ENCODE measurements at regions of chr6 and their contacts with region 1.

Region 1: GRCh38 chr6:16712931-16713484 is 48.3 kb downstream of the ATXN1 start:
- DNase-seq: peak; percentile 57
- ATAC-seq: peak; percentile 63
- H3K4me3 Mint-ChIP-seq: peak overlapping the region; percentile 45
- H3K27ac Mint-ChIP-seq: peak overlapping the region; percentile 91
- H3K4me1 Mint-ChIP-seq: peaks cover 52% of the 10 kb centered on the region
- H3K27me3 Mint-ChIP-seq: no peaks in the 10 kb centered on the region

Region 2: DNA sequence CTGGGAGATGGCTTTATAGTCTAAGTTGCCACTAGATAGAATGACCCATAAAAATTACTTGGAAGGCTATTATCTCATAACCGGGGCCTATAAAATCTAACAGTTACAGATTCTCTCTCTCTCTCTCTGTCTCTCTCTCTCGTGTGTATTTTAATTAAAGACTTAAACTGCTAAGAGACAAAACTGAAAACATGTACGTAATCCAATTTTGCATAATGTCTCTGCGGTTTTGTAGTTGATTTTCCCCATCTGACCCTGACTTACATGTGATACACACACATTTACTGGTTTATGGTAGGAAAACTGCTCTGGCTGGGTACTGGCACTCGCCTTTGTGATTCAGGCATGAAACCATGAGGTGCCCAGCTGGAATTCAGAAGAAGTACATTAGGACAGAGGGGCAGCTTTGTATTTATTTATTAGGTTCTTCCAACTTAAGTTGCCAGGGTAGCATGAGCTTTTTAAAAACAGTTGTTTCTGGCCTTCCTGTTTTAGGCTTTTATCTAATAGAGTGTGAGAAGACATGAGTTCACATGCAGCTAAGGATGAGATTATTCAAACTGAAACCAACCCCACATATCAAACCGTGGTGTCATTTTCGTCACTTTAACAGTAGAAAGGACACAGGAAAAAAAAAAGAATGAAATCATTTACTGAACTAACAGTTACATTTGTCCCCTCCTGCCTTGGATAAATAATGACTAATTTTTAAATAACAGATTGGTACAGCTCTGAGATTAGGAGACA is 292.1 kb before region 1 on chr6:
- CTCF ChIA-PET with region 1: interaction called, 3 read pairs
- POLR2A ChIA-PET with region 1: no interaction called
- intact Hi-C with region 1: loop called in 1 of 2 experiments (anchors 2 kb)
- DNase-seq: peak; percentile 66
- ATAC-seq: peak; percentile 82
- H3K4me3 Mint-ChIP-seq: peak overlapping the region; percentile 58
- H3K27ac Mint-ChIP-seq: peak overlapping the region; percentile 94
- H3K4me1 Mint-ChIP-seq: peaks cover 53% of the 10 kb centered on the region
- H3K27me3 Mint-ChIP-seq: no peaks in the 10 kb centered on the region

Region 3: GRCh38 chr6:16591396-16592222 is 121.4 kb before region 1 on chr6:
- CTCF ChIA-PET with region 1: no interaction called
- POLR2A ChIA-PET with region 1: no interaction called
- intact Hi-C with region 1: loop called in 1 of 2 experiments (anchors 2 kb)
- DNase-seq: peak; percentile 61
- ATAC-seq: peak; percentile 87
- H3K4me3 Mint-ChIP-seq: no peak overlapping the region
- H3K27ac Mint-ChIP-seq: peak overlapping the region; percentile 78
- H3K4me1 Mint-ChIP-seq: peaks cover 19% of the 10 kb centered on the region
- H3K27me3 Mint-ChIP-seq: no peaks in the 10 kb centered on the region

Region 4: GRCh38 chr6:16670183-16670582 is 42.8 kb before region 1 on chr6:
- CTCF ChIA-PET with region 1: interaction called, 3 read pairs
- POLR2A ChIA-PET with region 1: no interaction called
- intact Hi-C with region 1: loop called (anchors 1 to 2 kb)
- DNase-seq: no peak
- ATAC-seq: peak; percentile 38
- H3K4me3 Mint-ChIP-seq: peak overlapping the region; percentile 7
- H3K27ac Mint-ChIP-seq: peak overlapping the region; percentile 87
- H3K4me1 Mint-ChIP-seq: peaks cover 63% of the 10 kb centered on the region
- H3K27me3 Mint-ChIP-seq: no peaks in the 10 kb centered on the region

Region 5: DNA sequence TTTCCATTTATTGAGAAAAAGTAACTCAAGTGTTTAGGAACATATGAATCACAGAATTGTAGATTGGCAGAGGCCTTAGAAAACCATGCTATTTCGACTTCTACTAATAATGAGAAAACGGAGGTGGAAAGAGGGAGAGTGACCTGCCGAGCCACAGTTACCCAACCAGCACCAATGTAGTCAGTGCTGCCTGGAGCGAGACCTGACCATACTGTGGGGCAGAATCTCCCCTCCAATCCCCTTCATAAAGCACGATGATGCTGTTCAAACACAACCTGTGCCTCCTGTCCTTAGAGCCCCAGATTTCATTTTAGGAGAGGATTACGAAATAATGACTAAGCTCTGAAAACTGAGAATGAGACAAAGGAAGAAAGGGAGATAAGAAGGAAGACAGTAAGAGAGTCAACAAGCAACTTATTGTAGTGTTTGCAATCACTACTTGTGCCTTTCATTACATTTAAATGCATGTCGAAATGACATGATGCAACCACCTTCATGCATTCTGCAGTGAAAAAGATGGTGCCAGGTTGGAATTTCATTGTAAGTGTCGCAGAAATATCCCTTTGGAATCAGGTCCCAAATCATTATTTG is 22.3 kb before region 1 on chr6:
- CTCF ChIA-PET with region 1: interaction called, 3 read pairs
- POLR2A ChIA-PET with region 1: no interaction called
- intact Hi-C with region 1: loop called (anchors 1 to 2 kb)
- DNase-seq: peak; percentile 73
- ATAC-seq: peak; percentile 75
- H3K4me3 Mint-ChIP-seq: peak overlapping the region; percentile 34
- H3K27ac Mint-ChIP-seq: peak overlapping the region; percentile 88
- H3K4me1 Mint-ChIP-seq: peaks cover 88% of the 10 kb centered on the region
- H3K27me3 Mint-ChIP-seq: no peaks in the 10 kb centered on the region

Region 6: DNA sequence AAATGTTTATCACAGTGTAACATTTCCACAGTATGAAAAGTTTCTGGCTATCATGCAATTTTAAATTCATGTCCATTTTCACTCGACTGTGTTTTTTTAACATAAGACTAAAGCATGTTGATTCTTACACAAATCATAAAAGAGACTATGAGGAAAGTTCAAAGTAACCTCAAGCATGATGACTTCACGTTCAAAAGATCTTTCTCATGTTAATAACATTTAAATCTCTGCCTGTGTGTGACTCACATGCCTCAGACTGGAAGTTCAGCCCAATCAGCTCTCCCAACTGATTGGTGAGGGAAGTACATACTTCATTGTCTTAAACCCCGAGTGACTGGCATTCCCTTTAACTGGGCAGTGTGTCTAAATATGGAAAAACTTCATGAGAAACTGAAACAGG is 10.8 kb after region 1 on chr6:
- CTCF ChIA-PET with region 1: interaction called, 4 read pairs
- POLR2A ChIA-PET with region 1: interaction called, 3 read pairs
- intact Hi-C with region 1: loop called (anchors 1 to 2 kb)
- DNase-seq: peak; percentile 29
- ATAC-seq: peak; percentile 88
- H3K4me3 Mint-ChIP-seq: no peak overlapping the region
- H3K27ac Mint-ChIP-seq: peak overlapping the region; percentile 17
- H3K4me1 Mint-ChIP-seq: peaks cover 47% of the 10 kb centered on the region
- H3K27me3 Mint-ChIP-seq: no peaks in the 10 kb centered on the region

Measured in activated CD4-positive, alpha-beta T cell treated with anti-CD3 and anti-CD28 coated beads for 36 hours (primary cell).